ENCODE measurements at regions of chr17 and their contacts with region 1.

Region 1: GRCh38 chr17:18217412-18218015 is 7.9 kb upstream of the LLGL1 start:
- DNase-seq: peak; percentile 74 to 90 (median 89)
- ATAC-seq: peak; percentile 81 to 86
- H3K4me3 ChIP-seq: no peak overlapping the region
- H3K27ac ChIP-seq: no peak overlapping the region
- H3K4me1 ChIP-seq: no peaks in the 10 kb centered on the region
- H3K27me3 ChIP-seq: no peaks in the 10 kb centered on the region

Region 2: DNA sequence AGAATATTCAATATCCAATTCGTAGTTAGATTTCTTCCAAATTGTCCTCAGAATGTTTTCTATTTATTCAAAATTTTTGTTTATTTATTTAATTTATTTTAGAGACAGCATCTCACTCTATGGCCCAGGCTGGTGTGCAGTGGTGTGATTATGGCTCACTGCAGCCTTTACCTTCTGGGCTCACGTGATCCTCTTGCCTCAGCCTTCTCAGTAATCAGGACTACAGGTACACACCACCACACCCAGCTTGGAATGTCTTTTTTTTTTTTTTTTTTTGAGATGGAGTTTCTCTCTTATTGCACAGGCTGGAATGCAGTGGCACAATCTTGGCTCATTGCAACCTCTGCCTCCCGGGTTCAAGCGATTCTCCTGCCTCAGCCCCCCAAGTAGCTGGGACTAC is 133.3 kb before region 1 on chr17:
- intact Hi-C with region 1: no loop called
- DNase-seq: no peak
- ATAC-seq: no peak
- H3K4me3 ChIP-seq: no peak overlapping the region
- H3K27ac ChIP-seq: no peak overlapping the region
- H3K4me1 ChIP-seq: peaks cover 6% of the 10 kb centered on the region
- H3K27me3 ChIP-seq: no peaks in the 10 kb centered on the region

Region 3: GRCh38 chr17:18141210-18141803 is 76.2 kb before region 1 on chr17:
- intact Hi-C with region 1: loop called in 1 of 4 experiments (anchors 10 kb)
- DNase-seq: peak in 1 of 3 donors; percentile 35
- ATAC-seq: peak in 1 of 2 donors; percentile 14
- H3K4me3 ChIP-seq: no peak overlapping the region
- H3K27ac ChIP-seq: no peak overlapping the region
- H3K4me1 ChIP-seq: no peaks in the 10 kb centered on the region
- H3K27me3 ChIP-seq: no peaks in the 10 kb centered on the region

Region 4: DNA sequence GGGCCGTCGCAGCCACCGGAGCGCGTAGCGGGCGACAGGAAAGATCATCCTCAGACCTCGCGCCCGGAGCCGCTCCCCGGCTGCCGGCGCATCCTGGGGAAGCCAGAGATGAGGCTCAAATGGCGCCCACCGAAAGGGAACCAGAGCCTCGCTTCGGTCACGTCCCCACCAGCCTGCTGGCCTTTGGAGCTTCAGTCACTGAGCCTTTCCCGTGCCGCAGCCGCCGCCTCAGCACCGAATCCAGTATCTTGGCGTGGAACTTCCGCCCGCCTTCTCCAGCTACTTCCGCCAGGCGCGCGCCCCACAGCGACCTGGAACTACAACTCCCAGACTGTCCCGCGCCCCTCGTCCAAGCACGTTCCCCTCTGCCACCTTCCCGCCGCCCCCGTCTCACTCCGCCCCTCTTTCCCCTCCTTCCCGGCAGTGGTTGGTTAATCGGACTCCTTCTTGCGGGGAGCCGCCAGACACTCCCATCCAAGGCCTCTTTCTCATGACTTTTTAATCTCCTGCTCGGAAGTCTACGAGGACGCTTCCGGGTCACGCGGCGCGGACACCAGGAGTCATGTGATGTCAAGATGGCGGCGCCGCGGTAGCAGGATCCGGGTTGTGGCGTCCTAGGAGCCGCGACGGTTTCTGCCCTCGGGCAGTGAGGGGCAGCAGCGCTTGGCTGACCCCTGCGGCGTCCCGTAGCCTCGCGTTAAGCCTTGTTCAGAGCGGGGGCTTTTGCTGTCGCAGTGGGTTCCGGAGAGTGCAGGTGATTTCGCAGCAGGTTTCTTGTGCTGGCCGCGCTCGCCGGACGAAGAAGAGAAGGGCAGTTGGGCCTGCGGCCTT is 97.4 kb after region 1 on chr17 and contains the starts of genes SMCR8 and TOP3A:
- intact Hi-C with region 1: loop called in 1 of 4 experiments (anchors 10 kb)
- DNase-seq: peak; percentile 98 to 99 (median 99)
- ATAC-seq: peak; percentile 99
- H3K4me3 ChIP-seq: peak within 1 kb of the TSS; percentile 73
- H3K27ac ChIP-seq: peak within 1 kb of the TSS; percentile 91
- H3K4me1 ChIP-seq: peaks cover 14% of the 10 kb centered on the region
- H3K27me3 ChIP-seq: no peaks in the 10 kb centered on the region
- total RNA-seq, gene SMCR8: 10.7 to 13.3 (median 11.7) TPM
- total RNA-seq, gene TOP3A: 10.6 to 14.9 (median 12.7) TPM

Measured in right cardiac atrium (tissue), 5 donors.